ENCODE measurements at regions of chr19 and their contacts with region 1.

Region 1: DNA sequence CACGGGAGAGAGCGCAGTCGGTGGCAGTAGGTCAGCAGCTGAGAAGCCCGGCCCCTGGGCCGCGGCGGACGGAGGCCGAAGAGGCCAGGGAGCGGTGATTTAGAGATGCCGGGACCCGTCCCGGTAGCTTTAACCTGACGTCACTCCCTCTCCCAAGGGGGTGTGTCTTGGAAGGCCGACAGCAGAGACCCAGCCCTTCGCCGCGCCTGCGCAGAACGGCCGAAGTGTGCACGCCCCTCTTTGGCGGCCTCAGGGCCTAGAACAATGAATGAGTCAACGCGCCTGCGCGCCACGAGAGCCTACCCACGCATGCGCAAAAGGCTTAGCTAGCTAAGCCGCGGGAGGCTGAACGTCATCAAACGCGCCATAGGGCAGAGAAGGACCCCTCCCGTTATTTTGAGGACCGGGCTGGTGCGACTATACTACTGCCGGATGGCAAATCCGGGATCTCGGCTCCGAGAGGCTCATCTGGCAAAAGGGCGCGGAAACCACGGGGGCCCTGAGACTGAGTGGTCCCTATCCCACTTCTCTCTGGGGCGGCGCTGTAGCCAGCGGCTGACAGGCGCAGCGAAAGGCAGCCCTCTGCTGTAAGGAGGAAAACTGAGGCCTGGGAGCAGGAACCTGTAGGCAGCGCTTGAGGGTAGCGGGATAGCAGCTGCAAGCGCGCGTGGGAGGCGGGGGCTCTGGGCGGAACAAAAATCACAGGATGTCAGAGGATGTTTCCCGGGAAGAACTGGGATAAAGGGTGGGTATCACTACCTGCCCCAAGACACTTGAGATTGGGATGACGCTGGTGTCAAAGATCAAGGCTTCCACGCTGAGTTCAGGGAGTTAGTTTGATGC is at the starts of genes IRGQ and ZNF576:
- DNase-seq: peak; percentile 100
- total RNA-seq, gene IRGQ: 30.2 TPM
- total RNA-seq, gene ZNF576: 11.5 TPM

Region 2: GRCh38 chr19:43532962-43533545 is 63.2 kb before region 1 on chr19 and contains the start of gene ZNF575:
- intact Hi-C with region 1: loop called (anchors 2 kb)
- DNase-seq: peak; percentile 95
- total RNA-seq, gene ZNF575: 1.7 TPM

Region 3: DNA sequence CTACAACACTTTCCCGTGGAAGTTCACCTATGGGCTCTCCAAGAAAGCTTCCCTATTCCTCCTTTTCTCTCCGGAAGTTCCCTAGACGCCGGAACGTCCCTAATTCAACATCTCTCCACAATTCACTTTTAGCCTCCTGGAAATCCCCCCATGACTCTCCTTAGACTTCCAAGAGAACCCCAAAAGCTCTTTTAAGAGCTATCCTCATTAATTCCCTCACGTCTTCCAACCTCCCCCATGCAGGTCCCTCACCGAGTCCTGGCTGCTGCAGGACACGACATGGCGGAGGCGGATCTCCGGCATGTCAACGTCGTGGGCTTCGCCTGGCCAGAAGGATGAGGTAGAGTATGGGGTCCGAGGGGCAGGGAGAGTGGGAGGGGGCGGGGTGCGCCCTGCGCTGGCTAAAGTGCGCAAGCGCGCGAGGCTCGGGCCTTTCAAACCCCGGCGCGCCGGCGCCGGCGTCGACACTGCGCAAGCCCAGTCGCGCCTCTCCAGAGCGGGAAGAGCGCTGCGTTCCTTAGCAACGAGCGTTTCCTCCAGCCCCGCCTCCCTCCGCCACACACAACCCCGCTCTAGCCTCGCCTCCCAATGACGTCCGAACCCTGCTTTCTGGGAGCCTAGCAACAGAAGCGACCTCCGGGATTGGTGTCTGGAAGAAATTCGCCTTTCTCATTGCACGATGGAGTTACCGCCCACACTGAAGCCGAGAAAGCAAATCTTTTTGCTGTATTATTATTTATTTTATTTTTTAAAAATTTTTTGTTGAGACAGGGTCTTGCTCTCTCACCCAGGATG is 20.9 kb before region 1 on chr19 and contains the starts of genes PINLYP and XRCC1:
- intact Hi-C with region 1: loop called (anchors 1 kb)
- DNase-seq: peak; percentile 98
- total RNA-seq, gene PINLYP: 1.7 TPM
- total RNA-seq, gene XRCC1: 17.9 TPM

Region 4: GRCh38 chr19:43619262-43620060 is 23.2 kb after region 1 on chr19 and contains the start of gene ZNF428:
- intact Hi-C with region 1: loop called (anchors 1 kb)
- DNase-seq: peak; percentile 92
- total RNA-seq, gene ZNF428: 35.6 TPM

Region 5: GRCh38 chr19:43631491-43631890 is 35.3 kb after region 1 on chr19:
- intact Hi-C with region 1: no loop called
- DNase-seq: no peak

Region 6: DNA sequence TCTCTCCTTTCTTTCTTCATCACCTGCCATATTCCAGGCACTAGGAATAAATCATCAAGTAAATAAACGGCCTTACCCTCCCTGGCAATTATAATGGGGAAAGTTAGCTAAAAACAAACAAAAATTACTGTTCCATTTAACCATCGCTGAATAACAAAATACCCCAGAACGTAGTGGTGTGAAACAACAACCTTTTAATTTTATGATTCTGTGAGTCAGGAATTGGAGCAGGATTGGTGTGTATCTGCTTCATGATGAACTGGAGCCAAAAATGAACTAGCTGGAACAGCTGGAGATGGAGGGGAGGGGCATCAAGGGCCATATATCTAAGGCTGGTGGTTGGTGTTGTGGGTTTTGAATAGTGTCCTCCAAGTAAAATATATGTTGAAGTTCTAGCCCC is 47.1 kb after region 1 on chr19:
- intact Hi-C with region 1: no loop called
- DNase-seq: no peak

Region 7: DNA sequence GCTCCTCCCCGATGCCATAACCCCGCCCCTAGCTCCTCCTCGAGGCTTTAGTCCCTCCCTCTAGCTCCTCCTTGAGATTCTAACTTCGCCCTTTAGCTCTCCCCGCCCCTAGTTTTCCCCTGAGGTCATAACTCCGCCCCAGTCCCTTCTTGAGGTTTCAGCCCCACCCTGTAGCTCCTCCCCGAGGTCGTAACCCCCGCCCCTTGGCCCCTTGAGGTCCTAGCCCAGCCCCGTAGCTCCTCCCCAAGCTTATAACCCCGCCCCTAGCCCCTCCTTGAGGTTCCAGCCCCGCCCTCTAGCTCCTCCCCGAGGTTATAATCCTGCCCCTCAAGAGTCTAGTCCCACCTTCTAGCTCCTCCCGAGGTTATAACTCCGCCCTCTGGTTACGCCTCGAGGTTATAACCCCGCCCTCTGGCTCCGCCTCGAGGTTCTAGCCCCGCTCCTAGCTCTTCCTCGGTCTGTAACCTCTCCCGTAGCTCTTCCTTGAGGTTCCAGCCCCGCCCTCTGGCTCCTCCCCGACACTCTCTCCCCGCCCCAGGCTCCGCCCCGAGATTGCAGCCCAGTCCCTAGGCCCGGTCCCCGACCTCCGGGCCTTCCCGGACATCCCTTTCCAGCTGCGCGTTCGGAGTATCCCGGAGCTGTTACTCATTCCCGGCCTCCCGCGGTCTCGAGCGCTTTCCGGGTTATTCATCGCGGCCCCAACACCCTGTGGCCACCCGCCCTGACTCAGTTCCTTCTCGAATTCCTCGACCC is 72.4 kb after region 1 on chr19:
- intact Hi-C with region 1: loop called (anchors 2 kb)
- DNase-seq: peak; percentile 99